Motor neuron (in vitro differentiated cells): ENCODE measurements at regions of chr2 and their contacts with region 1.

Region 1: GRCh38 chr2:118774458-118775133 is 72.9 kb downstream of the EN1 start:
- ATAC-seq: peak; percentile 98 to 99 (median 99)
- H3K4me3 ChIP-seq: peak overlapping the region; percentile 30 to 40 (median 37)
- H3K27ac ChIP-seq: no peak overlapping the region
- H3K4me1 ChIP-seq: peaks cover 0 to 3% of the 10 kb centered on the region in 2 donors

Region 2: GRCh38 chr2:118348380-118349034 is 426.1 kb before region 1 on chr2:
- in situ Hi-C with region 1: no loop called
- ATAC-seq: no peak
- H3K4me3 ChIP-seq: no peak overlapping the region
- H3K27ac ChIP-seq: no peak overlapping the region
- H3K4me1 ChIP-seq: no peaks in the 10 kb centered on the region

Region 3: DNA sequence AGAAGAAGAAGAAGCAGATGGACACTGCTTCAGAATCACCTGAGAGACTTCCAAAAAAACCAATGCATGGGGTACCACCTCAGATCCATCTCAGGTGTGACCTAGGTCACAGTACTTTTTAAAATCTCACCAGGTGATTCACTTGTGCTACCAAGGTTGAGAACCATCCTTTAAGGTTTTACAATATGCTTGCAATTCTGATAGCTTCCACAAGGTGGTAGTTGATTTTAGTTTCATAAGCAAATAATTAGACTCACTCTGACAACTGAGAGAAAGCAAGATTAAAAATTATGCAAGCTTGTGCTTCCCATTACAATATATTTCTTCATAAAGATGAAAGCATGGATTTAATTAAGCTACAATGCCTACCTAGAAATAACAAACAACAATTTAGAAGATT is 282.3 kb before region 1 on chr2:
- in situ Hi-C with region 1: loop called in 1 of 9 experiments (anchors 25 kb)
- ATAC-seq: no peak
- H3K4me3 ChIP-seq: no peak overlapping the region
- H3K27ac ChIP-seq: no peak overlapping the region
- H3K4me1 ChIP-seq: peaks cover 0 to 8% of the 10 kb centered on the region in 2 donors

Region 4: GRCh38 chr2:118668431-118669424 is 105.9 kb before region 1 on chr2:
- in situ Hi-C with region 1: loop called in 1 of 9 experiments (anchors 25 kb)
- ATAC-seq: peak; percentile 67 to 93 (median 90)
- H3K4me3 ChIP-seq: no peak overlapping the region
- H3K27ac ChIP-seq: peak overlapping the region; percentile 49 to 54
- H3K4me1 ChIP-seq: peaks cover 17 to 23% of the 10 kb centered on the region in 2 donors